OCI-LY7 (cell line): ENCODE measurements at regions of chr21 and their contacts with region 1.

Region 1: GRCh38 chr21:34967509-34968289 is 81.4 kb downstream of the RUNX1 start:
- DNase-seq: no peak
- H3K4me3 ChIP-seq: no peak overlapping the region
- H3K27ac ChIP-seq: no peak overlapping the region
- H3K4me1 ChIP-seq: no peaks in the 10 kb centered on the region
- CTCF ChIP-seq: no peak

Region 2: GRCh38 chr21:34874684-34875513 is 92.8 kb before region 1 on chr21:
- CTCF ChIA-PET with region 1: no interaction called
- POLR2A ChIA-PET with region 1: interaction called, 10 read pairs
- intact Hi-C with region 1: no loop called
- DNase-seq: peak; percentile 56
- H3K4me3 ChIP-seq: peak overlapping the region; percentile 32
- H3K27ac ChIP-seq: peak overlapping the region; percentile 53
- H3K4me1 ChIP-seq: peaks cover 19% of the 10 kb centered on the region
- CTCF ChIP-seq: no peak